ENCODE measurements at regions of chr10 and their contacts with region 1.

Region 1: DNA sequence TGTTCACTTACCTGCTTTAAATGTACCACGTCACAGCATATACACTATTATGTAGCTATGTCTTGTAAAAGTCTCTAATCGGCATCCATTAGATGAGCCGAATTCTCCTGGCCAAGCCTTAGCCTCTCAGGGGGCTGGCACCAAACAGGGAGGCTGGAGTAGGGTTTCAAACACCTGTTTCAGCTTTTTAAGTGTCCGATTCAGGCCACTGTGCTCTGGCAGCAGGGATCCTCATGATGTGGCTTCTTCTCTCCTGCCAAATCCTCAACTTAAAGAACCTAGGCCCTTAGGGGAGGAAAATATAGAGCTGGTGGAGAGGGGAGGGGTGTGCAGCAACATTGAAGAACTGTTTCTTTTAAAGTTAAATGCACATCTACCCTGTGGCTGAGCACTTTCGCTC is 68.5 kb upstream of the NFKB2 start:
- DNase-seq: no peak
- ATAC-seq: no peak

Region 2: DNA sequence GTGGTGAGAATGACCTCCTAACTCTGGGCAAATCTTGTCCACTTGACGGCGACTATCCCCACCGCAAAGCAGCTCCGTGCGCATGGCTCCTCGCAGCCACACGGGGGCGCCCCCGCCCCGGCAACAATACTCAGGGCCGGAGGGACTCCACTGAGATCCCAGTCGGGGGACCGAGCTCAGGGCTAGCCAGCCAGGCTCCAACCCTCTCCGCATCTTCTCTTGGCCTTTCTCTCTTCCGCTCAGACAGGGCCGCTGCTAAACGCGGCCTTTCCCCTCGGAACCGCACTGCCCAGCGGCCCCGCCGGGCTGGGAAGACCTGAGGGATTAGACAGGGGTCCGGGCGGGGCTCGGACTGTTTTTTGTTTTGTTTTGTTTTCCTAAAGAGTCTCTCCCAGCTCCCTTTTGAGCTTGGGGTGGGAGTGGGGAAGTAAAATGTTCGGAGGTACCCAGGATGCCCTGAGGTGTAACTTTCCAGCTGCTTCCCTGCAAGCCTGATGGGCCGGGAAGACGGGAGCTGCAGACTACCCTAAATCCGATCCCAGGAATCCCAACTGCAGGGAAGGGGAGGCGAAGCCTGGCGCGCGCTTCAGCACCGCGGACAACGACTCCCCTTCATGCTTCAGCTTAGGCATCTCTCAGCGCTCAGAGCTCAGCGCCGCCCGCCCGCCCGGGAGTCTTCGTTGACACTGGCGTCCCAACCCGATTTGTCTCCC is 486.1 kb before region 1 on chr10:
- intact Hi-C with region 1: no loop called
- DNase-seq: peak; percentile 93
- ATAC-seq: peak; percentile 69

Region 3: DNA sequence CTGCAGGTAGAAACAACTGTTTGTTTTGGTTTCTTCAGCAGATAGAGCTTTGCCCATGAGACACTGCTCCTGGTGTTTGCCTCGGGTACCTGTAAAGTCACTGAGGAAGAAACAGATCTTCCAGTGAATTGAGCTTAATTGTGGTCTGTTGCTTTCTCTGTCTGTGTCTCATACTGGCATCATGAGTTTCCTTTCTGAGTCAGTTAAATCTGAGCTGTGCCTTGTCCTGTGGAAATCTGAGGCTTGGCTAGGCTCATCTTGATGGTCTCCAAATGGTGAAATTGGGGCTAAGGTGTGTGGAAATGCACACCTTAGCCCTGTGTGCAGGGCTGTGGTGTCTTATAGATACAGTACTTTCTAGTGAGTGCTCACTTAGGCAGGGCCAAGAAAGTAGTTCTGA is 14.3 kb before region 1 on chr10:
- intact Hi-C with region 1: loop called (anchors 2 kb)
- DNase-seq: no peak
- ATAC-seq: no peak

Region 4: DNA sequence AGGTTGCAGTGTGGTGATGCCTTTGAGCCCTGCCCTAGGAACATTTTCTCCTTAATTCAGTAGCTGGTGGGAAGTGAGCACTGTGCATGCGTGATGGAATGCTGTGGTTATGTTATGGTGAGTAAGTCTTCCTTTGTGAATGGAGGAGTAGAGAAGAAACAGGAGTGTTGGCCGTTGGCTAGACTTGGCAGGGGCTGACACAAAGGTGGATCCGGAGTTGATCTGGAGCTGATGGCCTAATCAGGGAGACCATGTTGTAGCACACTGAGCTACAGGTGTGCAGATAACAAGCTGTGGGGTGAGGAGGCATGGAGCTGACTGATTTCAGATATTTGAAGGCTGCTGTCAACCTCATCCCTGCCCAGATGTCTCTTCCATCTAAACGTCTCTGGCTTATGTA is 713.4 kb after region 1 on chr10:
- intact Hi-C with region 1: no loop called
- DNase-seq: no peak
- ATAC-seq: no peak

Measured in Right ventricle myocardium inferior (tissue), 1 donor.